ENCODE measurements at regions of chr10 and their contacts with region 1.

Region 1: DNA sequence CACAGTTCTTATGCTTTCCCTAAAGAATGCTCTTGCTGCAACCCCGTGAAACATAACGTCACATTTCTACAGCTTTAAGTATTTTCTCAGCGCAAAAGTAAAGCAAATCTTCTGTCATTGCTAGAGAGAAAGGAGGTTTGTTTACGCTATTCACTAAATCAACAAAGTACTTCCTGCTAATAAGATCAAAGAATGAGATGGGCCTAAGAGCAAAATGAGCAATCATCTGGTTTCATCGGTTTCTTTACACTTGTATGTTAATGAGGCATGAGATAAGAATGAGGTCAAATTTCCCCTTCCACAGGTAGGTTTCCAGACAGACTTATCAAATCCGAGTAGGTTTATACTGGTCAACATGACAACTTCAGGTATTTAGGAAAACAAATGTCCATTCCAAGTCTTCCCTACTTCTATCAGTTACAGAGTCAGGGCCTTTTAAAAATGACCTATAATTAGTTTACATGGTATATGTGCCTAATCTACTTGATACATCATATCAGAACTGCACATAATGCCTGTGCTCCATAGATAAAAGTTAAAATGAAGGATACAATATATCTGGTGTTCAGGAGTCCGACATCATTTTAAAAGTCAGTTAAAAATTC is 8.4 kb downstream of the USP6NL start:
- DNase-seq: peak in 1 of 4 experiments; percentile 55
- ATAC-seq: no peak; the same call in 2 of the 3 replicates
- H3K4me3 ChIP-seq: no peak overlapping the region; the same call in 1 of the 2 replicates
- H3K27ac ChIP-seq: peak overlapping the region; percentile 54
- H3K4me1 ChIP-seq: peaks cover 28 to 62% of the 10 kb centered on the region in 2 experiments
- H3K27me3 ChIP-seq: no peaks in the 10 kb centered on the region
- CTCF ChIP-seq: no peak
- EP300 ChIP-seq: peak; percentile 73
- POLR2A ChIP-seq: no peak
- RAD21 ChIP-seq: no peak

Region 2: GRCh38 chr10:11539191-11539868 is 63.7 kb before region 1 on chr10:
- CTCF ChIA-PET with region 1: no interaction called
- POLR2A ChIA-PET with region 1: no interaction called
- in situ Hi-C with region 1: no loop called
- intact Hi-C with region 1: loop called (anchors 5 kb)
- DNase-seq: peak; percentile 22 to 58 (median 30)
- ATAC-seq: peak; percentile 77
- H3K4me3 ChIP-seq: no peak overlapping the region
- H3K27ac ChIP-seq: peak overlapping the region; percentile 81
- H3K4me1 ChIP-seq: peaks cover 5 to 30% of the 10 kb centered on the region in 2 experiments
- H3K27me3 ChIP-seq: no peaks in the 10 kb centered on the region
- CTCF ChIP-seq: no peak
- EP300 ChIP-seq: peak; percentile 65; the same call in 1 of the 2 replicates
- POLR2A ChIP-seq: no peak
- RAD21 ChIP-seq: no peak; a peak in 2 of 4 replicates

Region 3: GRCh38 chr10:11586170-11586569 is 16.9 kb before region 1 on chr10:
- CTCF ChIA-PET with region 1: no interaction called
- POLR2A ChIA-PET with region 1: interaction called, 8 read pairs
- in situ Hi-C with region 1: no loop called
- intact Hi-C with region 1: loop called (anchors 2 kb)
- DNase-seq: no peak
- ATAC-seq: no peak
- H3K4me3 ChIP-seq: no peak overlapping the region
- H3K27ac ChIP-seq: peak overlapping the region; percentile 38; the same call in 1 of the 3 replicates
- H3K4me1 ChIP-seq: peaks cover 7 to 36% of the 10 kb centered on the region in 2 experiments
- H3K27me3 ChIP-seq: no peaks in the 10 kb centered on the region
- CTCF ChIP-seq: no peak
- EP300 ChIP-seq: no peak
- POLR2A ChIP-seq: no peak
- RAD21 ChIP-seq: no peak